HEK293 (cell line): ENCODE measurements at regions of chr9 and their contacts with region 1.

Region 1: GRCh38 chr9:124126571-124127289 is 115.2 kb downstream of the LHX2 start:
- H3K4me3 ChIP-seq: no peak overlapping the region
- H3K27ac ChIP-seq: no peak overlapping the region
- H3K4me1 ChIP-seq: no peaks in the 10 kb centered on the region
- CTCF ChIP-seq: peak; percentile 60; the same call in 1 of the 2 replicates

Region 2: GRCh38 chr9:123929870-123930831 is 196.6 kb before region 1 on chr9 and contains the start of gene DENND1A:
- CTCF ChIA-PET with region 1: no interaction called
- POLR2A ChIA-PET with region 1: no interaction called
- H3K4me3 ChIP-seq: peak within 1 kb of the TSS; percentile 44
- H3K27ac ChIP-seq: peak within 1 kb of the TSS; percentile 84
- H3K4me1 ChIP-seq: peaks cover 11% of the 10 kb centered on the region
- CTCF ChIP-seq: no peak

Region 3: DNA sequence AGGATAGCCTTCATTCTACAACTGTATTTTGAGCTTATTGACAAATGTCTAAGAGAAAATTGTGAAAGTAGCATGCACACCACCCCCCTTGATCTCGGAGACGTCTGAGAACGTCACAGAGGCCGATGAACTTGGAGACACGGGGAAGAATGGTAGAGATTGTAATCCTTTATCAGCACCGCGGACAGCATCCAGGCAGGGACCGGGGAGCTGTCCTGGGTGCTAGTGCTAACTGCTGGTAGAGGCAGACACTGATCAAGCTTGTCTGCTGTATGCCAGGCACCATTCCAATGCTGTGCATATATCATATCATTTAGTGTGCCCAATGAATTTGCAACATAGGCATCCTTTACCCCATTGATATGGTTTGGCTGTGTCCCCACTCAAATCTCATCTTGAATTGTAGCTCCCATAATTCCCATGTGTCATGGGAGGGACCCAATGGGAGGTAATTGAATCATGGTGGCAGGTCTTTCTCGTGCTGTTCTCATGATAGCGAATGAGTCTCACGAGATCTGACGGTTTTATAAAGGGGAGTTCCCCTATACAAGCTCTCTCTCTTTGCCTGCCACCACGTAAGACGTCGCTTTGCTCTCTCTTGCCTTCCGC is 16.3 kb before region 1 on chr9:
- CTCF ChIA-PET with region 1: interaction called, 28 read pairs
- POLR2A ChIA-PET with region 1: no interaction called
- H3K4me3 ChIP-seq: no peak overlapping the region
- H3K27ac ChIP-seq: no peak overlapping the region
- H3K4me1 ChIP-seq: no peaks in the 10 kb centered on the region
- CTCF ChIP-seq: no peak